Pancreas (tissue), 10 donors: ENCODE measurements at regions of chr11 and their contacts with region 1.

Region 1: DNA sequence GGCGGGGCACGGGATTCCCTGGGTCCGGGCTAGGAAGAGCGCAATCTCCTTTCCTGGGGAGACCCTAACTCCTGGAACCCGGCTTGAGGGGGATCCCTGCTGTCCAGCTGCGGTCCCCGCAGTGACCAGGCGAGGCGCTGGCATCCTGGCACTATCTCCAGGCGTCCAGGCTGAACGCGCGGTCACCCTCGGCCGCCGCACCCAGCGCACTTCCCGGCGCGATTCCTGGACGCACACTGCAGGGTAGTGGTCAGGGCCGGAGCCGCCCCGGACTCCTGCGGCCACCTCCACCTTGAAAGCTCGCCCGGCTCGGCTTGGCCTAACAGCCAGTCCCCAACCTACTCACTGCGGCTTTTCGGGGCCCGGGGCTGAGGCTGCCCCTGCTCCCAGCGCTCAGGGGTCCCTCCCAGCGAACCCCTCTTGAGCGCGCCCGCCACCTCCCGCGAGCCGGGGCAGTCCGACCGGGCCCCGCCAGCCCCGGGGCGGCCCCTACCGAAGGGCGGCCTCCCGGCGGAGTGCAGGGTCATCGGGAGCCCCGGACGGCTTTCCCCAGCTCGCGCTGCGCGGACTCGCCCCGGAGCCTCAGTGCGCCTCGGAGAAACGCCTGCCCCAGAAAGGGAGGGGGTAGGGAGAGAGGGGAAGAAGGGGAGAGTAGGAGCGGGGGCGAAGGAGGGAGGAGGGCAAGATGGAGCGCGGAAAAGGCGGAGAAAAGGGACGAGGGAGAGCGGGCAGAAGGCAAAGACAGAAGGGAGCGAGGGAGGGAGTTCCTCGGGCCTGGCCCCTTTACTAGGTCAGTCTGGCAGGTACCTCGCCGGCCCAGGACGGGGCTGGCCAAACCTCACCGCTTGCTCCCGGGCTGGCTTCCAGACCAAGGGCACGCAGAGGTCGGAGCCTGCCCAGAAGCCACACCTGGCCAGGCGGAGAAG is 1.0 kb downstream of the POU2AF3 start:
- DNase-seq: peak; percentile 69 to 92 (median 80)
- ATAC-seq: peak; percentile 79 to 88 (median 86)
- H3K4me3 ChIP-seq: peak overlapping the region; percentile 43 to 77 (median 62)
- H3K27ac ChIP-seq: peak overlapping the region; percentile 84 to 94 (median 92)
- H3K4me1 ChIP-seq: peaks cover 4 to 40% (median 33%) of the 10 kb centered on the region in 3 donors
- H3K27me3 ChIP-seq: no peaks in the 10 kb centered on the region
- CTCF ChIP-seq: peak; percentile 31 to 63 (median 55)

Region 2: GRCh38 chr11:111359223-111360149 is 60.1 kb after region 1 on chr11:
- intact Hi-C with region 1: loop called in 1 of 3 experiments (anchors 10 kb)
- DNase-seq: no peak
- ATAC-seq: peak in 2 of 4 donors; percentile 8 to 9
- H3K4me3 ChIP-seq: no peak overlapping the region
- H3K27ac ChIP-seq: peak overlapping the region; percentile 64 to 90 (median 72)
- H3K4me1 ChIP-seq: peaks cover 30 to 54% (median 54%) of the 10 kb centered on the region in 3 donors
- H3K27me3 ChIP-seq: no peaks in the 10 kb centered on the region
- CTCF ChIP-seq: no peak

Region 3: DNA sequence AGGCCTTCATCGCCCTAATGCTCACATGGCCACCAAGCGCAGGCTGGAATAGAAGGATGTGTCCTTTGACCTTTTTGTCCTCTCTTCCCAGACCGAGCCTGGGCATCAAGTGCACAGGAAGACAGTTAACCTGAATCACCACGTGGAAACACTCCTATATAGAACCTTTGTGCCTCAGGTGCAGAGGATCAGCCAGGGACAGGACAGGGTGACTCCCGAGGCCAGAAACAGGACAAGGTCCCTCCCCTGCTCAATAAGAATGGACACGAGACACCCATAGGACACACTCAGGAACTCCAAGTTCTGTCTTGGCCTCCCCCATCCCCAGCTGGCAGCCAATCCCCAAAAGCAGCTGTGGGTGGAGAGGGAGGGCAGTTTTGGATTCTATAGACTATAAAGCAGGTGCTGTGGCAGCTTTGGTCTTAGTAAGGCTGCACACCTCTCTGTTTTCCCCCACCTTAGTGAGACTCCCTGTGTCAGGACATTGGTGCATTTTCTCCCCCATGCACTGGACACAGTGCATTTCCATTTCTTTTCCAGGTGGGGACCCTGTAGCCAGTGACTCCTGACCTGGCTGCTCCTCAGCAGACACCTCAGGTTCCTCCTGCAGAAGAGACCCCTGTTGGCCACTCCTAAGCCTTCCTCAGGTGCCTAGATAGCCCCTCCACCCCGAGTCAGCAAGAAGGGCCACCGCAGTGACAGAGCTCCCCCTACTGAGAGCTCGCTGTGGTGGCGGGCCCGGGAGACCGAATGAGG is 123.3 kb after region 1 on chr11:
- intact Hi-C with region 1: loop called in 2 of 3 experiments (anchors 5 kb)
- DNase-seq: peak; percentile 59 to 81 (median 74)
- ATAC-seq: peak; percentile 55 to 89 (median 86)
- H3K4me3 ChIP-seq: no peak overlapping the region
- H3K27ac ChIP-seq: no peak overlapping the region
- H3K4me1 ChIP-seq: peaks cover 7 to 17% (median 15%) of the 10 kb centered on the region in 3 donors
- H3K27me3 ChIP-seq: no peaks in the 10 kb centered on the region
- CTCF ChIP-seq: peak; percentile 45 to 70 (median 69)

Region 4: GRCh38 chr11:111438846-111439520 is 139.6 kb after region 1 on chr11:
- intact Hi-C with region 1: loop called in 1 of 3 experiments (anchors 5 kb)
- DNase-seq: no peak
- ATAC-seq: no peak
- H3K4me3 ChIP-seq: no peak overlapping the region
- H3K27ac ChIP-seq: no peak overlapping the region
- H3K4me1 ChIP-seq: peaks cover 13 to 29% (median 23%) of the 10 kb centered on the region in 3 donors
- H3K27me3 ChIP-seq: no peaks in the 10 kb centered on the region
- CTCF ChIP-seq: no peak

Region 5: GRCh38 chr11:112588252-112588694 is 1288.9 kb after region 1 on chr11:
- intact Hi-C with region 1: no loop called
- DNase-seq: peak in 5 of 6 donors; percentile 21 to 58 (median 51)
- ATAC-seq: peak; percentile 71 to 96 (median 94)
- H3K4me3 ChIP-seq: no peak overlapping the region
- H3K27ac ChIP-seq: no peak overlapping the region
- H3K4me1 ChIP-seq: no peaks in the 10 kb centered on the region
- H3K27me3 ChIP-seq: no peaks in the 10 kb centered on the region
- CTCF ChIP-seq: peak; percentile 40 to 75 (median 62)